ENCODE measurements at regions of chr1 and their contacts with region 1.

Region 1: GRCh38 chr1:53430261-53430660 is 28.9 kb upstream of the DMRTB1 start:
- DNase-seq: no peak
- H3K4me3 ChIP-seq: no peak overlapping the region
- H3K27ac ChIP-seq: no peak overlapping the region
- H3K4me1 ChIP-seq: no peaks in the 10 kb centered on the region
- H3K27me3 ChIP-seq: no peaks in the 10 kb centered on the region
- CTCF ChIP-seq: no peak
- POLR2A ChIP-seq: no peak

Region 2: GRCh38 chr1:53073868-53074311 is 356.4 kb before region 1 on chr1:
- intact Hi-C with region 1: loop called (anchors 10 kb)
- DNase-seq: peak in 1 of 2 donors; percentile 47
- H3K4me3 ChIP-seq: no peak overlapping the region
- H3K27ac ChIP-seq: peak overlapping the region; percentile 17 to 71
- H3K4me1 ChIP-seq: no peaks in the 10 kb centered on the region
- H3K27me3 ChIP-seq: no peaks in the 10 kb centered on the region
- CTCF ChIP-seq: no peak
- POLR2A ChIP-seq: no peak

Region 3: DNA sequence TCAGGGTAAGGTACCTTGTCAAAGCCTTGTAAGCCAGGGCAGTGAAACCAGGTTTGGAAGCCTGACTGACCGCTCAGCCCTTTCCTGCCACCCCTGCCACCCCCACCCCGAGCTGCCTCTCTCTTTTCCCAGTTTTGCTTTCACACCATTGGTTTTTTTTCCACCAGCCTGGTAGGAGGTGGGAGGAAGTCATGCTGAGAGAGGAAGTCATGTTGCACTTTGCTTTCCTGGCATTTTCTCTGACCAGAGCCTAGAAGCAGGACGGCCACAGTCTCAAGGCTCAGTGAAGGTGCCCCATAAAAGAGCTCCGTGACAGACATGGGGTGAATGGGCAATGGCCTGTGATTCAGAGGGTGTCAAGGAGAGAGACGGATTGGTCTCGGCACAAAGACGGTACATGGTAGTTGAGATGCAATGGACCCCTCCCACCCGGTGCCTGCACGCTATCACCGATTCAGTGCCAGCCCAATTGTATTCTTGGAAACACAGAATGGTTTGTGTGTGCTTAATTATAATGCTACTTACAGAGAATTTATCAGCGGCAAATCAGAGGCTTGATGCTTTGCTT is 13.2 kb before region 1 on chr1:
- intact Hi-C with region 1: loop called (anchors 2 kb)
- DNase-seq: no peak
- H3K4me3 ChIP-seq: no peak overlapping the region
- H3K27ac ChIP-seq: no peak overlapping the region
- H3K4me1 ChIP-seq: no peaks in the 10 kb centered on the region
- H3K27me3 ChIP-seq: peaks cover 0 to 5% of the 10 kb centered on the region in 2 donors
- CTCF ChIP-seq: no peak
- POLR2A ChIP-seq: no peak

Region 4: DNA sequence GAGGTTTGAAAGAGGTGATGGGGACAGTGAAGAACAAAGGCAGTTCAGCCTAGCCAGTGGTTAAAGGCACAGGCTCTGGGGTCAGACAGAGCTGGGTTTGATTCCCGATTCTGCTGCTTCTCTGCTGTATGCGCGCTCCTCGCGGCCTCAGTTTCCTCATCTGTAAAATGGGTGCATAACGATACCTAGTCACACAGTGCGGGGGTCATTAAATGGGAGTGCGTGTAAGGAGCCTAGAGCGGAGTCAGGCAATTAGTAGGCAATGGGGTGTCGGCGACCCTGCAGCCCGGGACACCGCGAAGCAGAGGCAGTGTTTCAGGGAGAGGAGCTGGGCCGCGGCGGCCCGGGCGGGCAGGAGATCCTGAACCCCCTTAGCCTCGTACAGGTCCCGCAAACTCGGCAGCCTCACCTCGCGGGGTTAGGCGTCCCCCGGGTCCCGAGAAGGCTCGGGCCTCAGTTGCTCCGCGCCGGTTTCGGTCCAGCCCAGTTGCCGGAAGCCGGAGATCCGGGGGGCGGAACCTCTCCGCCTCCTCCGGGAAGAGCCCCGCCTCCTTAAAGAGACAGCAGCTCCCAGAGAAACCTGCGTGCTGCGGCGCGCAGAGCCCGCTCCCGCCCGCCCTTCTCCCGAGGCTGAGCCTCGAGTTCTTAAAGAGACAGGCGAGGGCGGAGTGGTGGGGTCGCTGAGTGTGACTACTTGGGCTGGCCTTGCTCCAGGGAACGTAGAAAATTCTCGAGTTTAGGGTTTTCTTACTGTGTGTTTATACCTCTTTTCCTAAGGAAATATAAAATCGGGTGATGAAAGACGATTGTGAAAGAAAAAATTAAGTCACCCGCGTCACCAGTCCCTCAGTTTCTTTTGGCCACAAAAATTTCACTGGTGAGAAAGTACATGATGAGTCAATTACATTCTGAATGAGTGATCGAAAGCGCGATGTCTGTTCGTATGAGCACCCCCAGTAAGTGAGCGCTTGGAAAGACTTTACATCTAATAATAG is 459.3 kb after region 1 on chr1 and contains the start of gene YIPF1:
- intact Hi-C with region 1: no loop called
- DNase-seq: peak; percentile 86 to 89
- H3K4me3 ChIP-seq: peak within 1 kb of the TSS; percentile 73 to 94 (median 89)
- H3K27ac ChIP-seq: peak within 1 kb of the TSS; percentile 86
- H3K4me1 ChIP-seq: peaks cover 0 to 4% of the 10 kb centered on the region in 2 donors
- H3K27me3 ChIP-seq: no peaks in the 10 kb centered on the region
- CTCF ChIP-seq: no peak
- POLR2A ChIP-seq: no peak
- total RNA-seq, gene YIPF1: 21.3 to 43.6 (median 40.7) TPM